ENCODE measurements at regions of chr2 and their contacts with region 1.

Region 1: GRCh38 chr2:232438951-232439757 is 16.8 kb upstream of the ALPI start:
- DNase-seq: peak; percentile 10
- H3K4me3 ChIP-seq: no peak overlapping the region
- H3K27ac ChIP-seq: no peak overlapping the region
- H3K4me1 ChIP-seq: no peaks in the 10 kb centered on the region
- H3K27me3 ChIP-seq: peaks cover 0 to 2% of the 10 kb centered on the region in 2 experiments
- CTCF ChIP-seq: peak; percentile 14 to 46
- POLR2A ChIP-seq: no peak

Region 2: GRCh38 chr2:231853105-231853504 is 586.0 kb before region 1 on chr2:
- CTCF ChIA-PET with region 1: no interaction called
- POLR2A ChIA-PET with region 1: no interaction called
- dilution Hi-C with region 1: no loop called
- intact Hi-C with region 1: loop called (anchors 2 kb)
- DNase-seq: no peak
- H3K4me3 ChIP-seq: no peak overlapping the region
- H3K27ac ChIP-seq: no peak overlapping the region
- H3K4me1 ChIP-seq: no peaks in the 10 kb centered on the region
- H3K27me3 ChIP-seq: peaks cover 3 to 6% of the 10 kb centered on the region in 2 experiments
- CTCF ChIP-seq: no peak
- POLR2A ChIP-seq: no peak

Region 3: GRCh38 chr2:232310121-232310520 is 129.0 kb before region 1 on chr2:
- CTCF ChIA-PET with region 1: no interaction called
- POLR2A ChIA-PET with region 1: no interaction called
- dilution Hi-C with region 1: no loop called
- intact Hi-C with region 1: no loop called
- DNase-seq: no peak
- H3K4me3 ChIP-seq: no peak overlapping the region
- H3K27ac ChIP-seq: no peak overlapping the region
- H3K4me1 ChIP-seq: peaks cover 10% of the 10 kb centered on the region
- H3K27me3 ChIP-seq: no peaks in the 10 kb centered on the region
- CTCF ChIP-seq: no peak
- POLR2A ChIP-seq: no peak

Region 4: GRCh38 chr2:232365621-232366321 is 73.4 kb before region 1 on chr2:
- CTCF ChIA-PET with region 1: interaction called, 13 read pairs
- POLR2A ChIA-PET with region 1: no interaction called
- dilution Hi-C with region 1: no loop called
- intact Hi-C with region 1: loop called (anchors 1 kb)
- DNase-seq: no peak
- H3K4me3 ChIP-seq: no peak overlapping the region
- H3K27ac ChIP-seq: no peak overlapping the region
- H3K4me1 ChIP-seq: no peaks in the 10 kb centered on the region
- H3K27me3 ChIP-seq: no peaks in the 10 kb centered on the region
- CTCF ChIP-seq: peak; percentile 24 to 57
- POLR2A ChIP-seq: no peak